ENCODE measurements at regions of chr12 and their contacts with region 1.

Region 1: DNA sequence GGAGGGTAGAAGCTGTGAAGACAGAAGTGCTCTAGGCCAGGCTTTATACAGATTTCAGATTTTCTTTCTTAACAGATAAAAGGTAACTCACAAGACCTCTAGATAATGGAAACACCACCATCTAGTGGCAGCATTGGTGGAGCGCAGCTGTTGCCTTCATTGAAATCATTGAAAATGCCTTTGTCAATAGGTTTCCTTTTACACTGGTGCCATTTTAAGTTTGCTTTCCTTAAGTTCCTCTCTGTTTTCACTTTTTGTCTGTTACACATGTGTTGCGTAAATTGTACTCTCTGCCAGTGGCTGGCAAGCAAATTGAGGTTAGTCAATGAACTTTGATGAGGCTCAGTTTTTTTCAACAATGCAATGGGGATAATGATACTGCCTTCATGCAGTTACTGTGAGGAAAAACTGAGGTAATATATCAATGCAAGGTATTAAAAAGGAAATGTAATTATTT is 31.1 kb downstream of the ALDH1L2 start:
- DNase-seq: peak; percentile 87
- H3K4me3 Mint-ChIP-seq: no peak overlapping the region
- H3K27ac Mint-ChIP-seq: no peak overlapping the region
- H3K4me1 Mint-ChIP-seq: peaks cover 5% of the 10 kb centered on the region
- H3K27me3 Mint-ChIP-seq: no peaks in the 10 kb centered on the region

Region 2: DNA sequence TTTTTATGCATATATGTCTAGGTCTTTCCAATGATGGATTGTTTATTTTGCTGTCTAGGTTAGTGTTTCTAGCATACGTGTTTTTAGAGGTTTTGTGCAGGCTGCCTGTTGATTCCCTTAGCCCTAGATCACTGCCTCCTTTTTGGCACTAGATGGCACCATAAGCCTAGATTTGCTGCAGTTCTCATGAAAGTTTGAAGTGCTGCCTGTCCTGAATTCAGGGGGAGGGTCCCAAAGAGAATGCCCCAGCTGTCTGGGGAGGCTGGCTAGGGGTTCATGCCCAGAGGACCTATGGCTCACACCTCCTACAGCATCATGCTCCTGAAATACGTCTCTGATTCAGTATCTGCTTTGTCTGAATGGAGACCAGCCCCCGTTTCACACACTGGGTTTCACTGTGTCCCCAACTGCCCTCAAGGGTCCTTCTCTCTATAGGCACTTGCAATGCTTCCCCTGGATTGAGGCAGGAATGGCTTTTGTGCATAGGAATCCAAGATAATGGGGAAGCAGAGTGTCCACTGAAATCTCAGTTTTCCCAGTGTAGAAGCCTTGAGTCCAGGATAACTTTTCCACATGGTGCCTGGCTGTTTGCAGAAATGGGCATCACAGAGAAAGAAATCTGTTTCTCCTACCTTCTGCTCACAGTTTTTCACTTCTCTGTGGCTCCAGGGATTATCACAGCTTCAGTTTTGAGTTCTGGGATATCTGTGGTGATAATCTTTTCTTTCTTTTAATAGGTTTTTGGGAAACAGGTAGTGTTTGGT is 851.7 kb before region 1 on chr12:
- CTCF ChIA-PET with region 1: interaction called, 3 read pairs
- POLR2A ChIA-PET with region 1: no interaction called
- intact Hi-C with region 1: loop called (anchors 10 kb)
- DNase-seq: peak; percentile 50
- H3K4me3 Mint-ChIP-seq: no peak overlapping the region
- H3K27ac Mint-ChIP-seq: no peak overlapping the region
- H3K4me1 Mint-ChIP-seq: no peaks in the 10 kb centered on the region
- H3K27me3 Mint-ChIP-seq: peaks cover 8% of the 10 kb centered on the region

Region 3: GRCh38 chr12:104632724-104633201 is 420.4 kb before region 1 on chr12:
- CTCF ChIA-PET with region 1: no interaction called
- POLR2A ChIA-PET with region 1: no interaction called
- intact Hi-C with region 1: no loop called
- DNase-seq: peak; percentile 35
- H3K4me3 Mint-ChIP-seq: no peak overlapping the region
- H3K27ac Mint-ChIP-seq: no peak overlapping the region
- H3K4me1 Mint-ChIP-seq: peaks cover 37% of the 10 kb centered on the region
- H3K27me3 Mint-ChIP-seq: no peaks in the 10 kb centered on the region

Region 4: DNA sequence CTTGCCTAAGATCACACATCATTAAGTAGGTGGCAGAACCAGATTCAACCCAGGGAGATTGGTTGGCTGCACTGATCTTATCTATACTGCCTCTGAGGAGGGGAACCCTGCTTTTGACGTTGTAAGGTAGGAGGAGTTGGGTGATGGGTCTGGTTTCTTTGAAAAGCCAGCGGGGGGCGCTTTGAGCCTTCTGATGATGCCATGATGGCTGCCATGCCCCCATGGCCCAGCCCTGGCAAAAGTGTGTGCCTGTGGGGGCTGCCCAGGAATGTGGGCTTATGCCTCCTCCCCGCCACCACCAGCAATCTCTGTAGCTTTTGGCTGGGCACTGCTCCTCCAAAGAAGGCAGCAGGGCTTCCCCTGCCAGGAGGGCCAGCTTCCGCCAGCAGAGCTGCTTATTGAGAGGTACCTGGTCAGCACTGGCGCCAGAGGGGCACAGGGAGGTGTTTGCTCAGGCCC is 319.4 kb before region 1 on chr12:
- CTCF ChIA-PET with region 1: no interaction called
- POLR2A ChIA-PET with region 1: no interaction called
- intact Hi-C with region 1: loop called (anchors 1 kb)
- DNase-seq: peak; percentile 58
- H3K4me3 Mint-ChIP-seq: no peak overlapping the region
- H3K27ac Mint-ChIP-seq: no peak overlapping the region
- H3K4me1 Mint-ChIP-seq: peaks cover 69% of the 10 kb centered on the region
- H3K27me3 Mint-ChIP-seq: no peaks in the 10 kb centered on the region

Region 5: DNA sequence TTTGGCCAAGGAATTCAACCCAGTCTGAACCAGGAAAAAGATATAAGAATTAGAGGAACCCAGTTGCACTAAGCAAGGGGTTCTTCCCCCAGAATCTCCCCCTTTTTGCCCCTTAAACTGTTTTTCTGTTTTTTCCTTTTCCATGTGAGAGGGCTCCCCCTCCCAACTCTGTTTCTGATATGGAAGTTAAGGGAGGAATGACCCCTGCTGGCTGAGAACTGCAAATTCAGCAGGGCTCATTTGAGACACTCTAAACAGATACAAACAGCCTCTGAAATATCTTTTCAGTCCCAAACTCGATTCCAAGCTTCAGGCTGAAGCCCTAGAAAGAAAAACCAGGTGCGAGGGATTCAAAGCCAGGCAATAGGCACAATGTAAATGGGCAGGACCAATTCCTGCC is 227.7 kb before region 1 on chr12:
- CTCF ChIA-PET with region 1: no interaction called
- POLR2A ChIA-PET with region 1: no interaction called
- intact Hi-C with region 1: no loop called
- DNase-seq: peak; percentile 16
- H3K4me3 Mint-ChIP-seq: no peak overlapping the region
- H3K27ac Mint-ChIP-seq: no peak overlapping the region
- H3K4me1 Mint-ChIP-seq: peaks cover 5% of the 10 kb centered on the region
- H3K27me3 Mint-ChIP-seq: no peaks in the 10 kb centered on the region

Region 6: DNA sequence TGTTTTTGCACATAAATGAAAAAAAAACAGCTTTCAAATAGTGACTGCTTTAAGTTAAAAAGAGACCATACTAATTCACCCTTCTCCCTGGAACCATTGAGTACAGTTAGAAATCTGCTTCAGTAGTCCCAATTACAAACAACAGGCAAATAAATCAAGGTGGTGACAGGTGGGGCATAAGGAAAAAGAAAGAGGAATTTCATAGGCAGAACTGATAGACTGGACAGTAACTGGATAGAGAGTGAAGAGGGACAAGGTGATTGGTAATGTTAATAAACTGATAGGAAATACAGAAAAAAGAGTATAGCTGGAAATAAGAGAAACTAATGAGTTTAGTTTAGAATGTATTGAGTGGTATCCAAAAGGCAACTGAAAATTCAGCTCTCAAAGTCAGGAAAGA is 151.0 kb before region 1 on chr12:
- CTCF ChIA-PET with region 1: no interaction called
- POLR2A ChIA-PET with region 1: no interaction called
- intact Hi-C with region 1: no loop called
- DNase-seq: no peak
- H3K4me3 Mint-ChIP-seq: no peak overlapping the region
- H3K27ac Mint-ChIP-seq: no peak overlapping the region
- H3K4me1 Mint-ChIP-seq: no peaks in the 10 kb centered on the region
- H3K27me3 Mint-ChIP-seq: no peaks in the 10 kb centered on the region

Region 7: DNA sequence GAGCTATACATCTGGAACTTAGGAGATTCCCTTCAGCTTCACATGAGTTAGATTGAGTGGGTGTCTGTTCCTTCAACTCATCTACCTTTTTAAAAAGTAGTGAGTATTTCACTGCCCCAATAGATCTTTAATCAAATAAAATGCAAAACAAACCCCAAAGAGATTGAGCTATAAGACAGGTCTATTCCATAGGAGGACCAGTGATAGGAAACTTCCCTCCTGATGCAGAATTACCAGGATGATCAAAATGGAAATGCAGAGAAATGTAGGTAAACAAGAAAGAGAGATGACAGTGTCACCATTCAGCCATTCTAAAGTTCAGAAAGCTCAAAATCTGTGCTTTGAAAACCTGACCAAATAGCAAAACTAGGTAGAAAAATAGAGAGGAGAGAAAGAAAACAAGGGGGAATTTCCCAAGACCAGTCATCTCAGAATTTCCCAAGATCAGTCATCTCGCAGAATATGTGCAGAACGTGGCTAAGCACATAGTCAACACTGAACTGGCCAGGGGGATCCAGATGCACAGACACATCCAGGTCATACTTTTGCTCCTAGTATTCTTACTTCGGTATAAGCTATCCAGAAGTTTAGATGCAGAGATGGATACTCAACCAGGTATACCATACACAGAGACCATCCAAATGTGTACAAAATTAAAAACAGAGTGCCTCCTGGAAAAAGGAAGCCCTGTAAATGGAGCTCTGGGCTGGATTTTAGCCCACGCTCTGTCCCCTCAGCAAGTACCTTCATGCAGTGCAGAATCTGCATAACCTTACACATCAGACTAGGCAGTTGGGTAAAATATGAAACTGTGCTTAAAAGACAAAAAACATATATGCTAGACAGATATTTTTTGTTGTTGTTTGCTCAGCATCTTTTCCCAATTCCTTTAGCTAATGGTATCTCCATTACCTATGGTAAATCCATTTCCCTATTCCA is 122.5 kb before region 1 on chr12:
- CTCF ChIA-PET with region 1: interaction called, 5 read pairs
- POLR2A ChIA-PET with region 1: no interaction called
- intact Hi-C with region 1: loop called (anchors 2 kb)
- DNase-seq: peak; percentile 73
- H3K4me3 Mint-ChIP-seq: no peak overlapping the region
- H3K27ac Mint-ChIP-seq: peak overlapping the region; percentile 39
- H3K4me1 Mint-ChIP-seq: peaks cover 25% of the 10 kb centered on the region
- H3K27me3 Mint-ChIP-seq: no peaks in the 10 kb centered on the region

Region 8: DNA sequence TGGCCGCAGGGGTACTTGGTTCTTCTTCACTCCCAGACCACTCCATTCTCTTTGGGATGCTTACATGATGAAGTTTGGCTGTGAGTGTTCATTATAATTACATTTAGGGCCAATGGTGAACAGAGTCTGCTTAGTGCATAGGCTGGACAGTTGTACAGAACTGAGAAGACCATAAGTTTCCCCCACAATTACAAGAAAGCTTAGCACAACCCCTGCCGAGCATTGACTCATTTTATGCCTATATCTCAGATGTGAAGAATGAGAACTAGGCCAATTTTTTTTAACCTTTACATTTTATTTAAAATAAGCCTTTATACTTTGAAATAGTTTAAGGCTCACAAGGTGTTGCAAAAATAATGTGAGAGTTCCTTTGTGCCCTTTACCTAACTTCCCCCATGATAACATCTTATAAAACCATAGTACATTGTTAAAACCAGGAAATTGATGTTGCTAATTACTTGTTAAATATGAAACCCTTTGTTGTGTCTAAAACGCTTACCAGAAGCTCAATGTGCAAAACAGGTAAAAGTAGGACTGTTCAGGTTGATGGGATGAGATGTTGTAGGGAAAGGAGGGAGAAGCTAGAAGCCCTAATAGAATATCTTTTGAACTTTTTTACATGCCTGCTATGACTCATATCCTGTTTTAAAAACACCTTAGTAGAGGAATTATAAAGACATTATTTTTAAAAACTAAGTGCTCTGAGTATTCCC is 16.1 kb before region 1 on chr12:
- CTCF ChIA-PET with region 1: interaction called, 8 read pairs
- POLR2A ChIA-PET with region 1: no interaction called
- intact Hi-C with region 1: loop called (anchors 2 kb)
- DNase-seq: no peak
- H3K4me3 Mint-ChIP-seq: no peak overlapping the region
- H3K27ac Mint-ChIP-seq: peak overlapping the region; percentile 63
- H3K4me1 Mint-ChIP-seq: peaks cover 39% of the 10 kb centered on the region
- H3K27me3 Mint-ChIP-seq: no peaks in the 10 kb centered on the region

Region 9: DNA sequence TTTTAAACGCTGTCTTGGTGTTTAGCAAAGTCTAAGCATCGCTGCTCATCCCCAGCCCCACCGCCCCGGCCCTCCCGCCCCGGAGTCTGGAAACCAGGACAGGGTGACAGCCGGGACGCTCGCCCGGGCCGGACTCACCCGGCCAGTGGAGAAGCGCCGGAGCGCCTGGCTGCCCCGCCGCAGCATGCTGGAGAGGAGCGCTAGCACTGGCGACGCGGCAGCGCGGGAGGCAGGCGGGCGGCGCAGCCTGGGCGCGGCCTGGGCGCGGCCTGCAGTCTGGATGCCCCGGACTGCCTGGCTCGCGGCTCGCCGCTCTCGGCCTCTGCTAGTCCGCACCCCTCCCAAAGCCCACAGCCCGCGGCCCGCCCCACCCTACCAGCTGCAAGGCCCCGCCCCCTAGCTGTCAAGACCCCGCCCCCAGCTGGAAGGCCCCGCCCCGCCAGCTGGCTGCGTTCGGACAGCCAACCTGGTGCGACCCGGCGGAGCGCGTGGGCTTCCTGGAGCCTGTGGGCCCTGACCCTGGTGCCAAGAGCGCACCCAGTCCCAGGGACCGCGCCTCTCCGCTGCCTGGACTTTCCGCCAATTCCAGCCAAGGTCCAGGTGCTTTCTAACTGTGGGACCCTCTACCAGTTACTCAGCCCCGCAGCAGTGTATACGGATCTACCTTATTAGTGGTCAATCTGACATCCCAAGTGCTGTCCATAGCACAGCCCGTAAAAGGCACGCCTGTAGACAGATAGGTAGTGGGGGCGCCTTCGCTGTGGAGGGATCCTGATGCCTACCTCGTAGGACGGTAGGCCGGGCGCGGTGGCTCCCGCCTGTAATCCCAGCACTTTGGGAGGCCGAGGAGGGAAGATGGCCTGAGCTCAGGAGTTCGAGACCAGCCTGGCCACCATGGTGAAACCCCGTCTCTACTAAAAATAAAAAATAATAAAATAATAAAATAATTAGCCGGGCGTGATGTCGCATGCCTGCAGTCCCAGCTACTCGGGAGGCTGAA is 31.4 kb after region 1 on chr12 and contains the start of gene ALDH1L2:
- CTCF ChIA-PET with region 1: no interaction called
- POLR2A ChIA-PET with region 1: no interaction called
- intact Hi-C with region 1: no loop called
- DNase-seq: peak; percentile 76
- H3K4me3 Mint-ChIP-seq: peak within 1 kb of the TSS; percentile 78
- H3K27ac Mint-ChIP-seq: no peak within 1 kb of the TSS
- H3K4me1 Mint-ChIP-seq: peaks cover 8% of the 10 kb centered on the region
- H3K27me3 Mint-ChIP-seq: peaks cover 22% of the 10 kb centered on the region
- total RNA-seq, gene ALDH1L2: 4.3 to 4.8 TPM

Measured in activated CD4-positive, alpha-beta memory T cell treated with anti-CD3 and anti-CD28 coated beads for 36 hours (primary cell).